ENCODE measurements at regions of chr2 and their contacts with region 1.

Region 1: DNA sequence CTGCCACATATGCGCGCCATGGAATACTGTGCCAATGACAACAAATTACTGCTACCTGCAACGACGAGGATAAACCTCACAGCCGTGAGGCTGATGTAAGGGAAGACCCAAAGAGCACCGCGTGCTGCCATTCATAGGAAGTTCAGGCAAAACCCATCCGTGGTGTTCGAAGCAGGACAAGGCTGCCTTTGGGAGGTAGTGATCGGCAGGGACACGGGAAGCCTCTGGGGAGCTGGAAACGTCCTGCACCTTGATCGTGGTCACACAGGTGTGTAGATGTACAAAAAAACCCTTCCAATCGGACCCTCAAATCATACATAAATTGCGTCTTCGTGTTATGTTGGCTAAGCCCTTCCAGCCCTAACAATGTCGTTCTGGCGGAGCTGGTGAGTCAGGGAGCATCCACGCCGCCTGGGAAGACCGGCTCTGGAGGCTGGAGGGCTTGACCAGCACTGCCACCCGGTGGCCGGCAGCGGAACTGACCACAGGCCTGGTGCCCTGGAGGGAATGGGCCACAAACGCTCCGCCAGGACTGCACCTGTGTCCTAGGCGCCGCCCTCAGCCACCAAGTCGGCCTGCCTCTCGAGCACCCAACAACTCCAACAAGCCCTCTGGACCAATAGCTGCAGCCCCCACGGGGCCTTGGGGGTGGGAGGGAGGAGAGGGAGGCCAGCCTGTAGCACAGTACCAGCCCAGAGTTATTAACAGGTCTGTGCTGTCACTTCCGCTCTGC is 4.1 kb upstream of the NEURL3 start:
- DNase-seq: peak; percentile 93
- H3K4me3 ChIP-seq: no peak overlapping the region
- H3K27ac ChIP-seq: no peak overlapping the region
- H3K4me1 ChIP-seq: peaks cover 0 to 22% (median 17%) of the 10 kb centered on the region in 4 donors
- H3K27me3 ChIP-seq: no peaks in the 10 kb centered on the region
- CTCF ChIP-seq: peak; percentile 88 to 98 (median 96)
- EP300 ChIP-seq: no peak
- POLR2A ChIP-seq: no peak

Region 2: GRCh38 chr2:96138179-96139145 is 370.8 kb before region 1 on chr2 and contains the start of gene ASTL:
- intact Hi-C with region 1: loop called (anchors 10 kb)
- DNase-seq: no peak
- H3K4me3 ChIP-seq: no peak within 1 kb of the TSS
- H3K27ac ChIP-seq: no peak within 1 kb of the TSS
- H3K4me1 ChIP-seq: no peaks in the 10 kb centered on the region
- H3K27me3 ChIP-seq: peaks cover 0 to 12% (median 0%) of the 10 kb centered on the region in 3 donors
- CTCF ChIP-seq: peak in 3 of 4 experiments; percentile 19 to 33 (median 21)
- EP300 ChIP-seq: no peak
- POLR2A ChIP-seq: no peak
- total RNA-seq, gene ASTL: not detected

Region 3: GRCh38 chr2:96305091-96305978 is 203.9 kb before region 1 on chr2 and contains the start of gene SNRNP200:
- intact Hi-C with region 1: loop called (anchors 5 kb)
- DNase-seq: peak; percentile 93
- H3K4me3 ChIP-seq: peak within 1 kb of the TSS; percentile 79 to 98 (median 87)
- H3K27ac ChIP-seq: peak within 1 kb of the TSS; percentile 84 to 88 (median 85)
- H3K4me1 ChIP-seq: peaks cover 0 to 39% (median 15%) of the 10 kb centered on the region in 4 donors
- H3K27me3 ChIP-seq: no peaks in the 10 kb centered on the region
- CTCF ChIP-seq: no peak
- EP300 ChIP-seq: no peak
- POLR2A ChIP-seq: peak; percentile 77 to 84
- total RNA-seq, gene SNRNP200: 69.4 to 86.1 (median 79.2) TPM

Region 4: GRCh38 chr2:96407041-96407918 is 102.0 kb before region 1 on chr2:
- intact Hi-C with region 1: loop called (anchors 1 kb)
- DNase-seq: peak; percentile 82
- H3K4me3 ChIP-seq: no peak overlapping the region
- H3K27ac ChIP-seq: peak overlapping the region in 1 of 4 donors; percentile 20
- H3K4me1 ChIP-seq: peaks cover 0 to 9% (median 8%) of the 10 kb centered on the region in 4 donors
- H3K27me3 ChIP-seq: no peaks in the 10 kb centered on the region
- CTCF ChIP-seq: peak; percentile 65 to 81 (median 77)
- EP300 ChIP-seq: no peak
- POLR2A ChIP-seq: no peak

Region 5: DNA sequence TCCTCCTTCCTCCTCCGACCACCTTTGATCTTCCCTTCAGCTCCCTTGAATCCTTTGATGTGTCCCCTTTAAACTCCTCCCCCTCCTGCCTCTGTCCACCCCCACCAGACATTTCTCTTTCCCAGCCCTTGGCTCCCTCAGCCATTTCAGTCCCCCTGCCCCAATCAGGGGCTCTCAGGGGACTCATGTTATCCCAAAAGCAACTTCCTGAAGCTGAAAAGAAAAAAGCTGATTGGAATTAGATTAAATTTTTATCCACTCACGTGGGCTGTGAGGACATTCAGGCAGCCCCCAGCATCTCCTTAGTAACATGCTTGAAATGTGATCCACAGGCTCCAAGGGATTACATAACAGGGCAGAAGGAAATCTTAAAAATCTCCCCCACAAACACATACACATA is 85.5 kb before region 1 on chr2:
- intact Hi-C with region 1: no loop called
- DNase-seq: no peak
- H3K4me3 ChIP-seq: no peak overlapping the region
- H3K27ac ChIP-seq: no peak overlapping the region
- H3K4me1 ChIP-seq: no peaks in the 10 kb centered on the region
- H3K27me3 ChIP-seq: peaks cover 0 to 6% (median 0%) of the 10 kb centered on the region in 3 donors
- CTCF ChIP-seq: no peak
- EP300 ChIP-seq: no peak
- POLR2A ChIP-seq: no peak

Region 6: DNA sequence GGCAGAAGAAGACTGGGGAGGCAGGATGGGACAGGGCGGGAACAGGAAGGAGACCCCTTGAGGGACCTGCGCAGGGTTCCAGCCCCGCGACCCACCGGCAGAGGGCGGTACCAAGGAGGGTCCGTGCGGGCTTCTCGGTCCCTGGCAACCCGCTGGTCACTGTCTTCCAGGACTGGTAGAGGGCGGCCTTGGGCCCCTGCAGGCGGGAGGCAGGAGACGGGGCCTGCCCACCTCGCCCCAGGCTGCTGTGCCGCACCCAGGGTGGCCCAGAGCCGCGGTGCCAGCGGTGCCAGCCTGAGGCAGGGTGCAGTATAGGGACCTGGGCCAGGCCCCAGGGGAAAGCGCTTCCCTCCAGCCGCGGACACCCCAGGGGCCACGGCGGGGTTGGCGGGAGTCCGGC is 38.6 kb before region 1 on chr2:
- intact Hi-C with region 1: loop called (anchors 2 kb)
- DNase-seq: no peak
- H3K4me3 ChIP-seq: peak overlapping the region in 3 of 4 donors; percentile 13 to 27 (median 27)
- H3K27ac ChIP-seq: no peak overlapping the region
- H3K4me1 ChIP-seq: peaks cover 0 to 6% (median 5%) of the 10 kb centered on the region in 4 donors
- H3K27me3 ChIP-seq: peaks cover 0 to 8% (median 0%) of the 10 kb centered on the region in 3 donors
- CTCF ChIP-seq: peak in 3 of 4 experiments; percentile 15 to 43 (median 33)
- EP300 ChIP-seq: no peak
- POLR2A ChIP-seq: no peak

Region 7: GRCh38 chr2:96554293-96555145 is 45.2 kb after region 1 on chr2:
- intact Hi-C with region 1: loop called (anchors 5 kb)
- DNase-seq: peak; percentile 91
- H3K4me3 ChIP-seq: peak overlapping the region in 2 of 4 donors; percentile 8 to 10
- H3K27ac ChIP-seq: peak overlapping the region in 2 of 4 donors; percentile 32 to 53
- H3K4me1 ChIP-seq: peaks cover 0 to 12% (median 10%) of the 10 kb centered on the region in 4 donors
- H3K27me3 ChIP-seq: no peaks in the 10 kb centered on the region
- CTCF ChIP-seq: peak; percentile 70 to 99 (median 92)
- EP300 ChIP-seq: no peak
- POLR2A ChIP-seq: no peak

Region 8: DNA sequence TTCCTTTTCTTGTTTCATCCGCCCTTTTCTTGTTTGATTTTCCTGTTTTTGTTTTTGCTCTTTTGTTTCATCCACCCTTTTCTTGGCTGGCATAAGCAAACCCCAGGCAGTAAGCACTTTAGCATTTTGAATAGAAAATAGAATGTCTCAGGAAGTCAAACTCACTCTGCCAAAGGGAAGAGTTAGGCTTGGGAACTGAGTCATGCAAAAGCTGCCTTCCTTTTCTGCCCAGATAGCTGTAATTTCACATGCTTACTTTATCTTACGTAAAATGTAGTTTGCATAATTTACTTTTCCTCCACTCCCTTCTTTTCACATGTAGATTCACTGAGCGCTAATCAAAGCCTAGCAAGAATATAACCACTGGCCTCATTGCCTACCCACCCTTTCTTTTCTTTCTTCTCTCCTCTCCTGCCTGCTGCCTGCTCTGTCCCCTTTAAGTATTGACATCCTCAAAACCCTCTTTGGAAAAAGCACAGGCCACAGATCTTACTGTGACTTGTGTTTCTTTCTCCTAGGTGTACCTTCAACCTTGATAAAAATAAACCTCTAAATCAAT is 1885.4 kb after region 1 on chr2:
- intact Hi-C with region 1: no loop called
- DNase-seq: no peak
- H3K4me3 ChIP-seq: no peak overlapping the region
- H3K27ac ChIP-seq: no peak overlapping the region
- H3K4me1 ChIP-seq: no peaks in the 10 kb centered on the region
- H3K27me3 ChIP-seq: peaks cover 0 to 4% (median 0%) of the 10 kb centered on the region in 3 donors
- CTCF ChIP-seq: no peak
- EP300 ChIP-seq: no peak
- POLR2A ChIP-seq: no peak